ENCODE measurements at regions of chr15 and their contacts with region 1.

Region 1: DNA sequence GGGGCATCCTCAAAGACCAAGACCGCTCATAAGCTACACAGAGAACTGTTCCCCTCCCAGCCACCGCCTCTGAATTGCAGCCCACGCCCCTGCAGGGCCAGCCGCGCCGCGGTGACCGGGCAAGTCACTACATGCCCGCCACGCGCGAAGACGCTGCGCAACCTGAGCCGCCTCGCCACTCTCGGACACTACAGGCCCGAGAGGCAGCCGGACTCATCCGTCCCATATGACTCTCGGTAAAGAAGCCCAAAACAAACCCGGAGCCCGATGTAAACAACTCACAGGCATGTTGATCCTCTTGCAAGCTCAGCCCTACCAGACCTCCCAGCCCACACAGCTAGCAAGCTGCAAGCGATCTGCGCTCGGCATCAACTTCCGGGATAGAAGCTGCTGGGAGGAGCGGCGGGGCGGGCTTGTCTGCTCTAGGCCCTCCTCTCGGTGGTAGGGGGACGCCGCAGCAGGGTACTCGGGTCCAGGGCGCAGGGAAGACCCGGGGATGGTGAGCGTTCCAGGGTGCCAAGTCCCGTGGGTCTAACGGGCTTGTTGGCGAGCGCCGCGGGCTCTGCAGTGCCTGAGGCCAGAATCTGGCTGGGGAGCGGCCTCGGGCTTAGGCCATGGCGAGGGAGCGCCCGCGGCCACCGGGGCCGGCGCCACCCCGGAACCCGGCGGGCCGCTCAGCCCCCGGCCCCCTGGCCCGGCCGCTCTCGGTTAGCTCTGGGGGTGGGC is at the start of gene RPS27L:
- DNase-seq: peak; percentile 94
- ATAC-seq: peak; percentile 98
- total RNA-seq, gene RPS27L: 118 TPM

Region 2: DNA sequence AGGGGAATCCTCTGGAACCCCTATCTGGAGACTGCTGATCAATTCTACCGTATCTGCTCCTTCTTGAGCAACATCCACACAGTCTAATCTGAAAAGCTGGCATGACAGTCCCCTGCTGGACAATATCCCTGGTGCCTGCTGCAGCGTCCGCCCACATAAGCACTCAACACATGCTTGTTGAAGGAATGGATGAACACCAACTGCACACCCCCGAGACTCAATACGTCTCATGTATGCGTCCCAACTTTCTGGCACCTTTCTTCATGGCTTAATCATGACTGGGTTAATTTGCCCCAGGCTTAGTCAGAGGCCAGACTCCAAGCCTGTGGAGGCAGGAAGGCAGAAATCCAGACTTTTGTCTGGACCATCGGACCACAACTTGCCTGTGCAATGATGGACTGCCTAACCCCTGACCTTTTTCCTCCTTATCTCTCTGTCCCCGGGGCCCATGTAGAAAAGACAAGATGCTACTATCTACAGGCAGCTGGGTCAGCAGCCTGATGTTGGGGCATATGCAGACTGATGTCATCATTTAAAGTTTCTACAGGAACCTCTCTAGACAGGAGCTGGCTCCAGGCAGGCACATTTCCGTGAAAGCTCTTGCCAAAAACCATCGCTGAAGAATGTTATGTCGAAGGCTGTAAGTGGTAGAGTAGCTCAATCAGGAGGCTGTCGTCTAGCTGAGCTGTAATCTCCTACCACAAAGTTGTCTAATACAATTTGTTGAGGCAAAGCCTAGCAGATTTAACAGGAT is 228.9 kb before region 1 on chr15:
- intact Hi-C with region 1: loop called (anchors 5 kb)
- DNase-seq: no peak
- ATAC-seq: no peak

Region 3: DNA sequence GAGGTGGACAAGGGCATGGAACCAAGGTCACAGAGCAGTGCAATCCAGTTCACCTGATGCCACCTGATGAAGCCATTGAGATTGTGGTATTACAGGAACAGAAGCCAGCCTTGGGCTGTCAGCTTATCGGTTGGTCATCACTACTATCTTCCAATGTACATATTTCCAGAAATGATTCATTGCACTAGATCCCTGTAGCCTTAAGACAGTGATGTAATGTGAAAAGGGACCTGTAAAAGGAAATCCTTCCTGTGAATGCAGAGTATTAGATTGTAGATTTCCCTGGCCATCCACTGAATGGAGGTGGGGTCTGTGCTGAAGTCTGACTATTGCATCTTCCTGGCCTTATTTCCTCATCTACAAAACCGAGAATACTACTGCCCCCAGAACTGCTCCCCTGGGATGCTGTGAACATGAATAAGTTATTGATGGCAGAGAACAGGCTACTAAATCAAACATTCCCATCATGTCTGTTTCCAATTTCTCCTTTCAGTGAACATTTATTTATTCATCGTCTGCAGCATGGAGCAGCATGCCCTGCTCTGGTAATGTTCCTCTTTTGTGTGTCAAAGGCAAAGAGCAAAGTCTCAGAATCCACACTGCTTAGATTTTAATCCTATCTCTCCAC is 162.1 kb before region 1 on chr15:
- intact Hi-C with region 1: no loop called
- DNase-seq: no peak
- ATAC-seq: no peak

Measured in sciatic nerve (tissue), 2 donors.